Activated naive CD4-positive, alpha-beta T cell treated with anti-CD3 and anti-CD28 coated beads for 36 hours (primary cell): ENCODE measurements at regions of chr21 and their contacts with region 1.

Region 1: DNA sequence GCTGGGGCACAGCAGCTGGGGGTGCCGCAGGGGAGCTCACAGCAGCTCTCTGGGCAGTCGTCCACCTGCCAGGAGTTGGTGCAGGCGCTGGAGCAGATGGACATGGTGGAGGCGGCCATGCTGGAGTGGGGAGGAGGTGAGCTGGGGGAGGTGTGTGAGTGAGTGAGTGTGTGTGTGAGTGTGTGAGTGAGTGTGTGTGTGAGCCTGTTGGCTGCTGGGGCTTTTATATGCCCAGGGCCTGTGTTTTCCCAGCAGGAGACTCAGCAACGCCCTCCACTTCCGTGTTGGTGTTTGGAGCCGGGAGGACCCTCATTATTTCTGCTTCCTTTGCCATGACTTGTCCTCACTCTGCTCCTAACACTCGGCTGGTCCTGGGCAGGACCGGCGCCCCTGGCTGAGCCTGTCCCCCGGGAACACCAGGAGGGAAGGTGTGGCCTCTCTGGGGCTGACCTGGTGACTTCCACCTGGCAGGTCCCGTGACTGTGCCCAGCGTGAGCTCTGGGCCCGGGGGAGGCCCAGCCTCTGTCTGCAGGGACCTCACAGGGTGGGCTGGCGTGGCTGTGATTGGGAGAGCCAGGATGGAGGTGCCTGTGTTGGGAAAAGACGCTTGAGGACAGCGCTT is at the start of gene KRTAP10-2:
- DNase-seq: no peak
- H3K4me3 Mint-ChIP-seq: no peak within 1 kb of the TSS
- H3K27ac Mint-ChIP-seq: no peak within 1 kb of the TSS
- H3K4me1 Mint-ChIP-seq: peaks cover 25% of the 10 kb centered on the region
- H3K27me3 Mint-ChIP-seq: no peaks in the 10 kb centered on the region
- total RNA-seq, gene KRTAP10-2: not detected

Region 2: DNA sequence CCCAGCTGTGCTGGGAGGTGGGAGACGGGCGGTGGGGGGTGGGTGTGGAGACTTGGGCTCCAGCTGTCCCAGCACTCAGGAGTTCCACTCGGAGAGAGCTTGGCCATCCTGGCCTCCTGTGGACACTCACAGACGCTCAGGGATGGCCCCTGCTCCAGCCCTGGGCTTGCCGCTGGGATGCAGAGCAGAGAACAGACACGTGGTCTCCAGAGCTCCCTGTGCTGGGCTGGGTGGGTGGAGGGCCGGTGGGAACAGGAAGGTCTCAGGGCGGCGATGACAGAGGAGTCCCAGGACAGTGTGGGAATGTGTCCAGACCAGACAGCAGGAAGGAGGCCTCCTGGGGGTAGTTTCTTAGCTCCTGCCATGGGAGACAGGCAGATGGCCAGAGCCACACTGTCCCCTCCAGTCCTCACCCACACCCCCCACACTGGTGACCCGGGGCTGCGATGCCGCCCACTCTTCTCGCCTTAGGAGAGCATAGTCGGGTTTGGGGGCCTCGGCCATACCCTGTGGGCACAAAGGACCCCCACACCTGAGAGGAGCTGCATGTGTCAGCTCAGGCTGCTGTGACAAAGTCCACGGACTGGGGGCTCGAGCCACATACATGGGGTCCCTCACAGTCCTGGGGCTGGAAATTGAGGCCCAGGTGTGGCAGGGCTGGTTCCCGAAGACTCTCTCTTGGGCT is 77.4 kb after region 1 on chr21:
- CTCF ChIA-PET with region 1: no interaction called
- intact Hi-C with region 1: loop called (anchors 2 kb)
- DNase-seq: no peak
- H3K4me3 Mint-ChIP-seq: no peak overlapping the region
- H3K27ac Mint-ChIP-seq: no peak overlapping the region
- H3K4me1 Mint-ChIP-seq: peaks cover 25% of the 10 kb centered on the region
- H3K27me3 Mint-ChIP-seq: no peaks in the 10 kb centered on the region

Region 3: GRCh38 chr21:44779417-44780136 is 228.1 kb after region 1 on chr21:
- CTCF ChIA-PET with region 1: no interaction called
- intact Hi-C with region 1: no loop called
- DNase-seq: no peak
- H3K4me3 Mint-ChIP-seq: no peak overlapping the region
- H3K27ac Mint-ChIP-seq: no peak overlapping the region
- H3K4me1 Mint-ChIP-seq: peaks cover 16% of the 10 kb centered on the region
- H3K27me3 Mint-ChIP-seq: no peaks in the 10 kb centered on the region